ENCODE measurements at regions of chr13 and their contacts with region 1.

Region 1: GRCh38 chr13:102580552-102581169 is 16.1 kb upstream of the TPP2 start:
- DNase-seq: peak; percentile 53
- ATAC-seq: peak; percentile 74
- H3K4me3 ChIP-seq: no peak overlapping the region
- H3K27ac ChIP-seq: no peak overlapping the region
- H3K4me1 ChIP-seq: no peaks in the 10 kb centered on the region
- H3K27me3 ChIP-seq: no peaks in the 10 kb centered on the region
- CTCF ChIP-seq: peak; percentile 64

Region 2: GRCh38 chr13:102724923-102725322 is 144.3 kb after region 1 on chr13:
- CTCF ChIA-PET with region 1: interaction called, 6 read pairs
- POLR2A ChIA-PET with region 1: no interaction called
- in situ Hi-C with region 1: no loop called
- intact Hi-C with region 1: loop called (anchors 2 kb)
- DNase-seq: no peak
- ATAC-seq: peak; percentile 87
- H3K4me3 ChIP-seq: no peak overlapping the region
- H3K27ac ChIP-seq: no peak overlapping the region
- H3K4me1 ChIP-seq: no peaks in the 10 kb centered on the region
- H3K27me3 ChIP-seq: peaks cover 2% of the 10 kb centered on the region
- CTCF ChIP-seq: peak; percentile 58

Region 3: GRCh38 chr13:102845630-102846260 is 265.1 kb after region 1 on chr13 and contains the start of gene ERCC5:
- CTCF ChIA-PET with region 1: no interaction called
- POLR2A ChIA-PET with region 1: no interaction called
- in situ Hi-C with region 1: no loop called
- intact Hi-C with region 1: loop called (anchors 1 kb)
- DNase-seq: peak; percentile 75
- ATAC-seq: peak; percentile 97
- H3K4me3 ChIP-seq: peak within 1 kb of the TSS; percentile 93 to 97
- H3K27ac ChIP-seq: peak within 1 kb of the TSS; percentile 91
- H3K4me1 ChIP-seq: peaks cover 7% of the 10 kb centered on the region
- H3K27me3 ChIP-seq: no peaks in the 10 kb centered on the region
- CTCF ChIP-seq: no peak
- total RNA-seq, gene ERCC5: 19.6 TPM

Measured in Panc1 (cell line).